Gastrocnemius medialis (tissue), 4 donors: ENCODE measurements at regions of chr9 and their contacts with region 1.

Region 1: DNA sequence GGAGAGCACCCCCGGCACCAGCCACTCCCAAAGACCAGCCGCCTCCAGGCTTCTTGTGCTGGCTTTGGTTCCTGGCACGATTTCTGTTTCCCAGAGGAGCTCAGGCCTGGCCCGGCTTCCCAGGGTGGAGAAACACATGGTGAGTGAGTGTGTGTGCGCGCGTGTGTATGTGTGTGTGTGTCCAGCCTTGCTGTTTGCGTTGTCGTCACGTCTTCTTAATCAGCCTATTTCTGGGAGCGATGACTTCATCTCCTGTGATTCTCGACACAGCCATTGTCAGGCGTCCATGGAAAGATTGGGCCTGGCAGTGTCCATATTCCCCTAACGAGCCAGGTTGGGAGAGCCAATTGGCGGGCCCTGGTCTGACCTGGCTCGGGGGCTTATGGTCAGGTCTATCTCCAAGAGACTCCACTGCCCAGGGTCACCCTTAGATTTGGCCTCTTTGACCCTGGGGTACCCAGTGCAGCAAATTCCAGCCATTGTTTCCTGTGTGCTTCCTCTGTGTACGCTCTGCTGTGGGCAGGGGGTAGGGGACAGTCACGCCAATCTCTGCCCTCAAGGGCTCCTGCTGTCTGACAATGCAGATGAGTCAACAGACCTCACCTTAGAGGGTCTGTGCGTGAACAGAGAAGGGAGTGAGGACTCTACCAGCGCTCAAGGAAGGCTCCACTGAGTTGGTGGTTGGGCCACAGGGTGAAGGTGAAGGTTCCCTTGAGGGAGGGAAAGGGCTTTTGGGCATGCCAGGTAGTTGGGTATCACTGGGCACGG is 73.8 kb downstream of the DAB2IP start:
- DNase-seq: peak; percentile 96 to 98
- ATAC-seq: peak; percentile 95 to 97
- H3K4me3 ChIP-seq: no peak overlapping the region
- H3K27ac ChIP-seq: peak overlapping the region; percentile 88 to 93 (median 90)
- H3K4me1 ChIP-seq: peaks cover 93 to 95% of the 10 kb centered on the region in 2 donors
- H3K27me3 ChIP-seq: no peaks in the 10 kb centered on the region
- CTCF ChIP-seq: peak in 1 of 5 experiments; percentile 18
- POLR2A ChIP-seq: peak; percentile 52 to 68

Region 2: GRCh38 chr9:121698627-121699570 is 26.3 kb before region 1 on chr9:
- in situ Hi-C with region 1: no loop called
- intact Hi-C with region 1: loop called (anchors 2 kb)
- DNase-seq: no peak
- ATAC-seq: peak in 1 of 2 donors; percentile 21
- H3K4me3 ChIP-seq: peak overlapping the region; percentile 39 to 48 (median 46)
- H3K27ac ChIP-seq: peak overlapping the region; percentile 77 to 88 (median 78)
- H3K4me1 ChIP-seq: peaks cover 26 to 42% of the 10 kb centered on the region in 2 donors
- H3K27me3 ChIP-seq: no peaks in the 10 kb centered on the region
- CTCF ChIP-seq: no peak
- POLR2A ChIP-seq: no peak

Region 3: GRCh38 chr9:121735065-121735789 is 10.0 kb after region 1 on chr9:
- in situ Hi-C with region 1: no loop called
- intact Hi-C with region 1: loop called (anchors 1 kb)
- DNase-seq: no peak
- ATAC-seq: no peak
- H3K4me3 ChIP-seq: peak overlapping the region in 2 of 4 donors; percentile 44
- H3K27ac ChIP-seq: peak overlapping the region; percentile 91 to 98 (median 94)
- H3K4me1 ChIP-seq: peaks cover 80 to 95% of the 10 kb centered on the region in 2 donors
- H3K27me3 ChIP-seq: no peaks in the 10 kb centered on the region
- CTCF ChIP-seq: peak in 2 of 5 experiments; percentile 21 to 44
- POLR2A ChIP-seq: no peak